CD14-positive monocyte (primary cell): ENCODE measurements at regions of chr9 and their contacts with region 1.

Region 1: DNA sequence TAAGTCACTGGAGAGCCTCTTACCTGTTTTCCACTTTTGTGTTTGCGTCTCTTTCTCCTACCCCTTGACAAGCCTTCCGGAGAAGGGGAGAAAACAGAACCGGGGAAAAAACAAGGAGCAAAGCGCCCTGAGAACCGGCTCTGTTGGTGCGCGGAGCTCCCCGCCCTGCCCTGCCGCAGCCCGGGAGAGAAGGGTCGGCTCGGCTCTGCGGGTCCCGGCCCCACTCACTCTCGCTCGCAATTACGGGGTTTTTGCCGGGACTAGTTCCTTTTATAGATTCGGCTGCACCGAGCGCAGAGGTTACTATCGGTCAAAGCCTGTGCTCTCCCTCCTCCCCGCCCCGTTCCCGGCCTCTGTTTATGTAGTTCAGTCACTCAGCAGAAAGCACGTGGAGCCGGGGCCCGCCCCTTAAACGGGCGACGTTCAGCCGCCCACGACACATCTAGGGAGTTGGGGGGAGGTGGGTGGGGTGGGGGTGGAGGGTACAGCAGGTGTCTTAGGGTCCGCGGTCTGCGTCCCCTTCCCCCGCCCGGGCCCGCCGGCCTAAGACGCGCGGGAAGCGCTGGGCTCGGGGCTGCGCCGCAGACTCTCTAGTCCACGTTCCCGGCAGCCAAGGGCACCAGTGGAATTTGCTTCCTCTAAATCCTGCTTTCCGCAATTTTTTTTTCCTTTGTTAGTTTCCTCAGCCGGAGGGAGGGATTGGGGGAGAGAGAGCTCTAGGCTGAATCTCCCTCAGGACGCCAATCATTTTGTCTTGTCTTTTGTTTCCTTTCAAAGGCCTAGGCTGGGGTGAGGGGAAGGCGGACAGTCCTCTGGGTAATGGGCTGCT is at the start of gene ABCA1:
- DNase-seq: peak; percentile 88 to 95 (median 92)
- H3K4me3 ChIP-seq: peak within 1 kb of the TSS; percentile 66 to 100 (median 77)
- H3K4me3 Mint-ChIP-seq: peak within 1 kb of the TSS; percentile 99 to 100
- H3K27ac ChIP-seq: peak within 1 kb of the TSS; percentile 71 to 85
- H3K27ac Mint-ChIP-seq: peak within 1 kb of the TSS; percentile 88 to 97 (median 94)
- H3K4me1 ChIP-seq: peaks cover 19 to 30% of the 10 kb centered on the region in 2 donors
- H3K4me1 Mint-ChIP-seq: peaks cover 26% of the 10 kb centered on the region
- H3K27me3 ChIP-seq: no peaks in the 10 kb centered on the region
- H3K27me3 Mint-ChIP-seq: peaks cover 2 to 10% (median 4%) of the 10 kb centered on the region in 3 donors
- CTCF ChIP-seq: no peak
- polyA plus RNA-seq, gene ABCA1: 2.0 to 5.1 (median 2.7) TPM

Region 2: DNA sequence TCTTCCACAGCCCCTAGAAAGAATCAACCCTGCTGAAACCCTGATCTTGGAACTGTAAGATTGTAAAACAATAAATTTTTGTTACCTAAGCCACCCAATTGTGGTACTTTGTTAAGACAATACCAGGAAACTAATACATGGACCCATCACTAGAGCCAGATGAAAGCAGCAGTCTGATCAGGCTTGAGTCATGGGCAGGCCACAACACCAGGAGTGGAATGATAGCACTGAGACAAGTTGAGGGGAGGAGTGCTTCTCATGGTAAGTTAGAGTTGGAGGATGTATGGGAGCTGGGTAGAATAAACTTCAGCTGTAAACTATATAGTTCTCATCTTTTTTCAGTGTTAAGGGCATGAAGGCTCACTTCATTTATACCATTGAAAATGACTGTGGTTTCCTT is 588.4 kb before region 1 on chr9:
- intact Hi-C with region 1: no loop called
- DNase-seq: no peak
- H3K4me3 ChIP-seq: no peak overlapping the region
- H3K4me3 Mint-ChIP-seq: no peak overlapping the region
- H3K27ac ChIP-seq: no peak overlapping the region
- H3K27ac Mint-ChIP-seq: no peak overlapping the region
- H3K4me1 ChIP-seq: no peaks in the 10 kb centered on the region
- H3K4me1 Mint-ChIP-seq: no peaks in the 10 kb centered on the region
- H3K27me3 ChIP-seq: no peaks in the 10 kb centered on the region
- H3K27me3 Mint-ChIP-seq: no peaks in the 10 kb centered on the region
- CTCF ChIP-seq: no peak

Region 3: GRCh38 chr9:104553261-104553660 is 374.9 kb before region 1 on chr9:
- intact Hi-C with region 1: no loop called
- DNase-seq: no peak
- H3K4me3 ChIP-seq: no peak overlapping the region
- H3K4me3 Mint-ChIP-seq: no peak overlapping the region
- H3K27ac ChIP-seq: no peak overlapping the region
- H3K27ac Mint-ChIP-seq: no peak overlapping the region
- H3K4me1 ChIP-seq: no peaks in the 10 kb centered on the region
- H3K4me1 Mint-ChIP-seq: no peaks in the 10 kb centered on the region
- H3K27me3 ChIP-seq: no peaks in the 10 kb centered on the region
- H3K27me3 Mint-ChIP-seq: no peaks in the 10 kb centered on the region
- CTCF ChIP-seq: no peak

Region 4: GRCh38 chr9:104780799-104781395 is 147.2 kb before region 1 on chr9:
- intact Hi-C with region 1: loop called in 1 of 2 experiments (anchors 5 kb)
- DNase-seq: peak; percentile 54 to 79 (median 72)
- H3K4me3 ChIP-seq: no peak overlapping the region
- H3K4me3 Mint-ChIP-seq: peak overlapping the region in 1 of 2 donors; percentile 39
- H3K27ac ChIP-seq: peak overlapping the region in 1 of 2 donors; percentile 74
- H3K27ac Mint-ChIP-seq: peak overlapping the region; percentile 77 to 91 (median 88)
- H3K4me1 ChIP-seq: peaks cover 34 to 45% of the 10 kb centered on the region in 2 donors
- H3K4me1 Mint-ChIP-seq: peaks cover 22% of the 10 kb centered on the region
- H3K27me3 ChIP-seq: no peaks in the 10 kb centered on the region
- H3K27me3 Mint-ChIP-seq: no peaks in the 10 kb centered on the region
- CTCF ChIP-seq: peak; percentile 81

Region 5: GRCh38 chr9:104968025-104968982 is 40.2 kb after region 1 on chr9:
- intact Hi-C with region 1: loop called (anchors 5 kb)
- DNase-seq: peak; percentile 73 to 81 (median 74)
- H3K4me3 ChIP-seq: peak overlapping the region; percentile 58 to 82 (median 64)
- H3K4me3 Mint-ChIP-seq: peak overlapping the region; percentile 89 to 96
- H3K27ac ChIP-seq: peak overlapping the region; percentile 61 to 75
- H3K27ac Mint-ChIP-seq: peak overlapping the region; percentile 83 to 98 (median 96)
- H3K4me1 ChIP-seq: peaks cover 16 to 24% of the 10 kb centered on the region in 2 donors
- H3K4me1 Mint-ChIP-seq: peaks cover 16% of the 10 kb centered on the region
- H3K27me3 ChIP-seq: no peaks in the 10 kb centered on the region
- H3K27me3 Mint-ChIP-seq: peaks cover 0 to 2% (median 2%) of the 10 kb centered on the region in 3 donors
- CTCF ChIP-seq: no peak

Region 6: GRCh38 chr9:105007143-105007542 is 79.0 kb after region 1 on chr9:
- intact Hi-C with region 1: loop called in 1 of 2 experiments (anchors 2 kb)
- DNase-seq: peak; percentile 92 to 97 (median 97)
- H3K4me3 ChIP-seq: peak overlapping the region in 1 of 3 experiments; percentile 43
- H3K4me3 Mint-ChIP-seq: peak overlapping the region; percentile 54 to 79
- H3K27ac ChIP-seq: peak overlapping the region; percentile 70 to 75
- H3K27ac Mint-ChIP-seq: peak overlapping the region; percentile 92 to 97 (median 95)
- H3K4me1 ChIP-seq: peaks cover 49 to 58% of the 10 kb centered on the region in 2 donors
- H3K4me1 Mint-ChIP-seq: peaks cover 47% of the 10 kb centered on the region
- H3K27me3 ChIP-seq: no peaks in the 10 kb centered on the region
- H3K27me3 Mint-ChIP-seq: peaks cover 0 to 6% (median 3%) of the 10 kb centered on the region in 3 donors
- CTCF ChIP-seq: no peak

Region 7: GRCh38 chr9:105064315-105065097 is 136.4 kb after region 1 on chr9:
- intact Hi-C with region 1: loop called in 1 of 2 experiments (anchors 5 kb)
- DNase-seq: peak; percentile 90 to 93 (median 91)
- H3K4me3 ChIP-seq: peak overlapping the region in 1 of 3 experiments; percentile 44
- H3K4me3 Mint-ChIP-seq: peak overlapping the region; percentile 64 to 85
- H3K27ac ChIP-seq: peak overlapping the region; percentile 97 to 99
- H3K27ac Mint-ChIP-seq: peak overlapping the region; percentile 96 to 99 (median 98)
- H3K4me1 ChIP-seq: peaks cover 56 to 57% of the 10 kb centered on the region in 2 donors
- H3K4me1 Mint-ChIP-seq: peaks cover 61% of the 10 kb centered on the region
- H3K27me3 ChIP-seq: no peaks in the 10 kb centered on the region
- H3K27me3 Mint-ChIP-seq: peaks cover 0 to 9% (median 1%) of the 10 kb centered on the region in 3 donors
- CTCF ChIP-seq: no peak

Region 8: DNA sequence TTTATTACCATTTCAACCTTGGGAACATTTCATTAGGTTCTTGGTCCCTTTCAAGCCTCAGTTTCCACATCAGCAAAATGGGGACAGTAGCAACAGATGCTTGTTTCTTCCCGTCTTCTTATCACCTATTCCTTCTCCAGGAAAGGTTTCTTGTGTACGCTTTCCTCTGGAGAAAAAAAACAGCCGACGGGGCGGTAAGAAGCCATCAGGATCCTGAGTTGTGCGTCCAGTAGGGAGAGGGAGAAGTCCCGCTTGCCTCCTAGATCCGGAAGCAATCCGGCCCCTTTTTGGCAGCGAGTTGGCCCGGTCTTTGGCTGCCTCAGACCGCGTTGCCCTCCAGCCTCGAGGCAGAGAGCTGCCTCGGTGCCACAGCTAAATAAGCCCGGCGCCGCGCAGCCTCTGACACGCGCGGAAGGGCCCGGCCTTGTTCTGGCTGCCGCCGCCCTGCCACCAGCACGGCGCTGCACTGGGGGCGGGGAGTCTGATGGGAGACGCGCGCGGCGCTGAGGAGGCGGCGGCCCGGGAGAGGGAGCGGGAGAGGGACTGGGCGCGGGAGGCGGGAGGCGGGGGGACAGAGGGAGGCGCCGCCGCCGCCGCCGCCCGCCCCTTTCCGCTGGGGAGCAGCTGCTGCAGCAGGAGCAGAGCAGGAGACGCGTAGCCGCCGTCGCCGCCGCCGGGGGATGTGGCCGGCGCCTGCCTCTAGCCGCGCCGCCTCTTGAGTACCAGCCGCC is 316.0 kb after region 1 on chr9 and contains the start of gene SLC44A1:
- intact Hi-C with region 1: loop called in 1 of 2 experiments (anchors 10 kb)
- DNase-seq: peak; percentile 91 to 95 (median 91)
- H3K4me3 ChIP-seq: peak within 1 kb of the TSS; percentile 82 to 93 (median 92)
- H3K4me3 Mint-ChIP-seq: peak within 1 kb of the TSS; percentile 95 to 98
- H3K27ac ChIP-seq: peak within 1 kb of the TSS; percentile 83 to 92
- H3K27ac Mint-ChIP-seq: peak within 1 kb of the TSS; percentile 89 to 97 (median 93)
- H3K4me1 ChIP-seq: peaks cover 15 to 25% of the 10 kb centered on the region in 2 donors
- H3K4me1 Mint-ChIP-seq: peaks cover 51% of the 10 kb centered on the region
- H3K27me3 ChIP-seq: no peaks in the 10 kb centered on the region
- H3K27me3 Mint-ChIP-seq: peaks cover 0 to 8% (median 3%) of the 10 kb centered on the region in 3 donors
- CTCF ChIP-seq: no peak
- polyA plus RNA-seq, gene SLC44A1: 6.9 to 52.1 (median 46.5) TPM